GM18951 (cell line): ENCODE measurements at regions of chr6 and their contacts with region 1.

Region 1: GRCh38 chr6:43143235-43144124 is 27.6 kb upstream of the SRF start:
- POLR2A ChIP-seq: no peak

Region 2: GRCh38 chr6:42901536-42901957 is 241.9 kb before region 1 on chr6:
- in situ Hi-C with region 1: loop called (anchors 10 kb)
- POLR2A ChIP-seq: no peak

Region 3: DNA sequence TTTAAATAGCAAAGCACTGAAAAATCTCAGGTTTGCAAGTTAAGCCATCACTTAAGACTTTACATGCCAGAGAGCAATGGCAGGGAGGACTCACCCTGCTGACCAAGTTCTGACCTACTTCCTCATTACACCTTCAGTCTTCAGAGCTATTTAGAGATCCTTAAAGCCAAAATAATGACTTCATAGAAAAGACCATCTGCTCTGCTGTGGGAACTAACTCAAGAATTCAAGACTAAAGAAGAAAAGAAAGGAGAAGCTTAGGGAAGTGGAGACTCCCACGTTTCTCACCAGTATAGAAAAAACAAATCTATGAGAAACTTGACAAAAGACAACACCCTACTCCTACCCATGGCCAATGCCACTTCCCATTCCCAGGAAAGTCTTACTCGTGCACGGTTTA is 403.7 kb after region 1 on chr6:
- in situ Hi-C with region 1: no loop called
- POLR2A ChIP-seq: no peak